BJ (cell line): ENCODE measurements at regions of chr6 and their contacts with region 1.

Region 1: GRCh38 chr6:12572896-12573827 is 143.4 kb upstream of the PHACTR1 start:
- DNase-seq: peak; percentile 54
- H3K4me3 ChIP-seq: no peak overlapping the region
- H3K27me3 ChIP-seq: no peaks in the 10 kb centered on the region
- CTCF ChIP-seq: no peak

Region 2: GRCh38 chr6:12557765-12558164 is 15.4 kb before region 1 on chr6:
- CTCF ChIA-PET with region 1: interaction called, 18 read pairs
- POLR2A ChIA-PET with region 1: no interaction called
- DNase-seq: no peak
- H3K4me3 ChIP-seq: no peak overlapping the region
- H3K27me3 ChIP-seq: no peaks in the 10 kb centered on the region
- CTCF ChIP-seq: no peak

Region 3: GRCh38 chr6:12761381-12762120 is 188.4 kb after region 1 on chr6:
- CTCF ChIA-PET with region 1: no interaction called
- POLR2A ChIA-PET with region 1: no interaction called
- DNase-seq: peak; percentile 92
- H3K4me3 ChIP-seq: peak overlapping the region; percentile 8
- H3K27me3 ChIP-seq: no peaks in the 10 kb centered on the region
- CTCF ChIP-seq: no peak

Region 4: GRCh38 chr6:13159300-13159699 is 586.1 kb after region 1 on chr6:
- CTCF ChIA-PET with region 1: no interaction called
- POLR2A ChIA-PET with region 1: no interaction called
- DNase-seq: no peak
- H3K4me3 ChIP-seq: no peak overlapping the region
- H3K27me3 ChIP-seq: no peaks in the 10 kb centered on the region
- CTCF ChIP-seq: no peak